ENCODE measurements at regions of chr22 and their contacts with region 1.

Region 1: DNA sequence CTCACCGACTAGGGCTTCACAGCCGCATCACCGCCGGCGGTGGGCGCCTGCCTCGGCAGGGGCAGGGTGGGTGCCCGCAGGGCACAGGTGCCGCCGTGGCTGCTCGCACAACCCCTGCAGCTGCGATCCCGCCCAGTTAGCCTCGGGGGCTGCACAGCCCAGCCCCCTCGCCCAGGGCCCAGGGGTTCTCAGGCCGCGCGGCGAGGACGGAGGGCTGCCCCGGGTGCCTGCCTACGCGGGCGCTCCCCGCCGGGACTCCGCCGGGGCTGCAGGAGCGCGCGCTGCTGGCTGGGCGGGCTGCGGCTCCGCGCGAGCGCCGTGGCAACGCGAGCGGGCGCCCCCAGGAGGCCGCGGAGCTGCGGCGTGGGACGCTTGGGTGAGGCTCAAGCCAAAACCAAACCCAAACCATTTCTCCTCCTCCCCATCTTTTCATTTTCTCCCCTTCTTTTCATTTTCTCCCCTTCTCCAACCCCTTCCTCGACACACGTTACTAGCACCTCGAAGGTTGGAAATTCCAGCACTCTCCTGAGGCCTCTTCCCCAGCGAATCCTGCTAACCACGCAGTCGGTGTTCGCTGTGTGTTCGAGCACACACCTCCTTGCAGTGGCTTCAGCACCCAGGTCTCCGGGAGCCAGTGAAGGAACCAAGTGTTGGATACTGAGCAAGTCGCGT is at the start of gene MICAL3:
- DNase-seq: peak; percentile 86
- H3K4me3 ChIP-seq: peak within 1 kb of the TSS; percentile 67
- H3K27ac ChIP-seq: no peak within 1 kb of the TSS
- H3K4me1 ChIP-seq: peaks cover 6% of the 10 kb centered on the region
- H3K27me3 ChIP-seq: no peaks in the 10 kb centered on the region
- CTCF ChIP-seq: peak; percentile 68
- total RNA-seq, gene MICAL3: 63.6 and 63.8 TPM in 2 replicates

Region 2: DNA sequence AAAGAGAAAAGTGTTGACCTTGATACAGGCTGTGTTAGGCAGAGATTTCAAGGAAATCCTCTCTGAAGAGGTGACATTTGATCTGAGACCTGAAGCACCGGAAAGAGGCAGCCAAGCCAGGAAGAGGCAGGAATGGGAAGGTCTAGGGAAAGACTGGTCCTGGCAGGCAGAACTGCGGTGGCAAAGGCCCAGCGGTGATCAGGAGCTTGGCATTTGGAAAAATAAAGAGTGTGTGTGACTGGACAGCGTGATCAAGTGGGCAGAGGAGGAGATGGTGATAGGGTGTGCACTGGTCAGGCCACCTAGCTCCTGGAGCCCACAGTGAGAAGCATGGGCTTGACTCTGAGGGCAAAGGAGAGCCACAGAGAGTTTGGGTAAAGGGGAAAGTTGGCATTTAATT is 989.2 kb before region 1 on chr22:
- CTCF ChIA-PET with region 1: no interaction called
- POLR2A ChIA-PET with region 1: no interaction called
- intact Hi-C with region 1: no loop called
- DNase-seq: no peak
- H3K4me3 ChIP-seq: no peak overlapping the region
- H3K27ac ChIP-seq: no peak overlapping the region
- H3K4me1 ChIP-seq: no peaks in the 10 kb centered on the region
- H3K27me3 ChIP-seq: peaks cover 15% of the 10 kb centered on the region
- CTCF ChIP-seq: no peak

Region 3: DNA sequence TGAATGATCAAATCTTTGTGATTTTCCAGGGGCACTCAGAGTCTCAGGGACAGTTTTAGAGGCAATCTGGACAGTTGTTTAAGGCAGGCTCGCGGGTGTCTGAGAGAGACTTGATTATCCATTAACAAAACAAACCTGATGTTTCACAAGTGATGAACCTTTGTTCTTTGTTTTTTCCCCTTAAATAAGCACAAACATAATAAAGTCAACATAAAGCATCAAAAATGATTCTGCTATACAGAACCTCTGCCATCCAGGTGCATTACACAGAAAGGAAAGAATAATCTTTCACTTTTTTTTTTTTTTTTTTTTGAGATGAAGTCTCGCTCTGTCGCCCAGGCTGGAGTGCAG is 263.3 kb before region 1 on chr22:
- CTCF ChIA-PET with region 1: no interaction called
- POLR2A ChIA-PET with region 1: interaction called, 12 read pairs
- intact Hi-C with region 1: no loop called
- DNase-seq: no peak
- H3K4me3 ChIP-seq: no peak overlapping the region
- H3K27ac ChIP-seq: peak overlapping the region; percentile 37
- H3K4me1 ChIP-seq: no peaks in the 10 kb centered on the region
- H3K27me3 ChIP-seq: no peaks in the 10 kb centered on the region
- CTCF ChIP-seq: no peak

Region 4: DNA sequence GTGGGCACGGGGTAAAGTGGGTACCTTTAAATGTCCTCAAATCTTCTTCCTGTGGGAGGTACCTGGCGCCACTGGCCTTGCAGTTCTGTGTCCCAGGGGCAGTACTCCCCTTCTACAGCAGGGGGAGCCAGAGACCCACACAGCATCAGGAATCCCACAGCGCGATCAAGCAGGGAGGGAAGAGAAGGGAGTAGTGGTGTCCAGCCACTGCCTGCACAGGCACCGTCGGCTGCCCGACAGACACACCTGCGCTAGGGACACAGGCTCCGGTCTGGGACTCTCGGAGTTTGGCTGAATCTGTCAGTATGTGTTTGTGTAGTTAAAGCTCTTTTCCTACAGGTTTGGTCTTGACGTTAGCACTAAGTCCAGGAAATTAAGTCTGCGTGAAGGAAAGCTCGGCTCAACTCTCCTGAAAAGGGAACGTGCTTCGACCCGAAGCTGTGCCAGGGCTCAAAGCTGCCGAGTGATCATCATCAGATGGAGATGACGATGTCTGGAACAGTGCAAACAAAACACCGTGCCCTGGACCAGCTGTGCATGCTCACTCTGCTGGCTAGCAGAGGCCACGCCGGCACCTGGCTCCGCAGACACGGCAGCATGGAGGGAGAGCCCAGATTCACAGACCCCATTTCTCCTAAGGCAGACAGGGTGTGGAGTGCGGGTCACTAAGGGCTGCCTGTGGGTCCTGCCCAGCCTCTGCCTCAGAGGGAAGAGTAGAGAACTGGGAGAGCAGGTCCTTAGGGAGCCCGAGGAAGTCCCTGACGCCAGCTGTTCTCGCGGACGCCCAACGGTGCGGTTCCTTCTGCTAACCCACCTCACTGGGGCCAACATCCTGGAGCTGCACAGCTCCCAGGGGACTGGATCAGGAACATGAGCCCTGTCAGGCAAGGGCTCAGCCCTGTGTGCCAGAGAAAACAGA is 194.1 kb before region 1 on chr22:
- CTCF ChIA-PET with region 1: interaction called, 4 read pairs
- POLR2A ChIA-PET with region 1: no interaction called
- intact Hi-C with region 1: loop called (anchors 1 kb)
- DNase-seq: peak; percentile 86
- H3K4me3 ChIP-seq: no peak overlapping the region
- H3K27ac ChIP-seq: no peak overlapping the region
- H3K4me1 ChIP-seq: no peaks in the 10 kb centered on the region
- H3K27me3 ChIP-seq: no peaks in the 10 kb centered on the region
- CTCF ChIP-seq: peak; percentile 97

Region 5: GRCh38 chr22:17954321-17955197 is 69.9 kb before region 1 on chr22:
- CTCF ChIA-PET with region 1: no interaction called
- POLR2A ChIA-PET with region 1: no interaction called
- intact Hi-C with region 1: no loop called
- DNase-seq: no peak
- H3K4me3 ChIP-seq: no peak overlapping the region
- H3K27ac ChIP-seq: no peak overlapping the region
- H3K4me1 ChIP-seq: no peaks in the 10 kb centered on the region
- H3K27me3 ChIP-seq: no peaks in the 10 kb centered on the region
- CTCF ChIP-seq: no peak

Region 6: DNA sequence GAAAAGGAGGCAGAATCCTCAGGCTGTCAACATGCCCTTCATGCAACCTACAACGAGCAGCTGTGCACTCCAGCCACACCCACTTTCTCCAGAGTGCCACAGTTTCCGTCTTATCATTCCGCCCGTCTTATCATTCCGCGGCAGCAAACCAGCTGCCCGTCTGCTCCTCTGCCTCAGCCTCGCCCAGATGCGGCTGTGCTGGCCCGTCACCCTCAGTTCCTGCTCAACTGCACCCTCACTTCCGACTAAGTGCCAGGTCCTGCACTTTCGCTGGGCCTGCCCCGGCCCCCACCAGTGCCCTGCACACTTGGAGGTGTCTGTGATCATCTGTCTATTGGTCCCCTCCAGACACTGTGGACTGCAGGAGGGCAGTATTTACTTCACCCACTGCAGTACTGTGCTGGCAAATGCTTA is 43.8 kb before region 1 on chr22:
- CTCF ChIA-PET with region 1: no interaction called
- POLR2A ChIA-PET with region 1: no interaction called
- intact Hi-C with region 1: no loop called
- DNase-seq: peak; percentile 54
- H3K4me3 ChIP-seq: peak overlapping the region; percentile 28
- H3K27ac ChIP-seq: no peak overlapping the region
- H3K4me1 ChIP-seq: peaks cover 9% of the 10 kb centered on the region
- H3K27me3 ChIP-seq: no peaks in the 10 kb centered on the region
- CTCF ChIP-seq: no peak

Region 7: GRCh38 chr22:18060646-18061620 is 36.5 kb after region 1 on chr22:
- CTCF ChIA-PET with region 1: no interaction called
- POLR2A ChIA-PET with region 1: no interaction called
- intact Hi-C with region 1: loop called (anchors 5 kb)
- DNase-seq: no peak
- H3K4me3 ChIP-seq: no peak overlapping the region
- H3K27ac ChIP-seq: no peak overlapping the region
- H3K4me1 ChIP-seq: peaks cover 9% of the 10 kb centered on the region
- H3K27me3 ChIP-seq: no peaks in the 10 kb centered on the region
- CTCF ChIP-seq: no peak

Region 8: DNA sequence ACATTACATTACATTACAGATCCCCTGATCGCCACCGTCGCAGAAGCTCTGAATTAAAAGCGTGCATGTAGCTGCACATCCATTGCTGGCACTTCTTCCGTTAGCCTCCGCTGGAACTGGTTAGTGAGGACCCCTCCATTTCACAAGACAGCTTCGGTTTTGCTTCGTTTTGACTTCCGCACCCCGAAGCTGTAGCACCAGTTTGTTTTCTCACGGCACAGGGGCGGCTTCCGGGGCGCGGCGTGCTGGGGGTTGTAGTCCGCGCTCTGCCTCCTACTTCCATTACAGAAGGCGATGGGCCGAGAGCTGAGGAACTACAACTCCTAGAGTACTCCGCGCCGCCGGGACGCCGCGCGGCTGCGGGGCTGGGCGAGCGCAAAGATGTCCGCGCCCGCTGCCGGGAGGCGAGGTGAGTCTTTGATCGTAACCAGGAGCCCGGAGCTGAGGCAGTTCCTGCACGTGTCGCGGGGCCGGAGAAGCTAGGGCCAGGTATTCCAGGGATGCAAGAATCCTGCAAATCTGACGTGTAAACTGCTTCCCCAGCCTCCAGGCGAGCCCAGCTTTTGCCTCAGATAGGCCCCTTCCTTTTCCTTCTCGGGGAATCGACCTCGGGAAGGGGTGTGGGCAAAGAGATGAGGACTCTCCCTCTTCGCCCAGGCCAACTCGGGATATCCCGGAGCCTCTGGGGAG is 53.4 kb after region 1 on chr22 and contains the start of gene PEX26:
- CTCF ChIA-PET with region 1: interaction called, 5 read pairs
- POLR2A ChIA-PET with region 1: no interaction called
- intact Hi-C with region 1: loop called (anchors 5 kb)
- DNase-seq: peak; percentile 97
- H3K4me3 ChIP-seq: peak within 1 kb of the TSS; percentile 91
- H3K27ac ChIP-seq: peak within 1 kb of the TSS; percentile 70
- H3K4me1 ChIP-seq: peaks cover 19% of the 10 kb centered on the region
- H3K27me3 ChIP-seq: no peaks in the 10 kb centered on the region
- CTCF ChIP-seq: no peak
- total RNA-seq, gene PEX26: 36.9 and 38.3 TPM in 2 replicates

Measured in A673 (cell line).